GM18951 (cell line): ENCODE measurements at regions of chr2 and their contacts with region 1.

Region 1: GRCh38 chr2:73700131-73700611 is 37.0 kb downstream of the TPRKB start:
- POLR2A ChIP-seq: no peak

Region 2: GRCh38 chr2:73640511-73640911 is 59.7 kb before region 1 on chr2:
- in situ Hi-C with region 1: loop called (anchors 5 kb)
- POLR2A ChIP-seq: no peak

Region 3: GRCh38 chr2:73952499-73953458 is 252.6 kb after region 1 on chr2:
- in situ Hi-C with region 1: no loop called
- POLR2A ChIP-seq: no peak

Region 4: DNA sequence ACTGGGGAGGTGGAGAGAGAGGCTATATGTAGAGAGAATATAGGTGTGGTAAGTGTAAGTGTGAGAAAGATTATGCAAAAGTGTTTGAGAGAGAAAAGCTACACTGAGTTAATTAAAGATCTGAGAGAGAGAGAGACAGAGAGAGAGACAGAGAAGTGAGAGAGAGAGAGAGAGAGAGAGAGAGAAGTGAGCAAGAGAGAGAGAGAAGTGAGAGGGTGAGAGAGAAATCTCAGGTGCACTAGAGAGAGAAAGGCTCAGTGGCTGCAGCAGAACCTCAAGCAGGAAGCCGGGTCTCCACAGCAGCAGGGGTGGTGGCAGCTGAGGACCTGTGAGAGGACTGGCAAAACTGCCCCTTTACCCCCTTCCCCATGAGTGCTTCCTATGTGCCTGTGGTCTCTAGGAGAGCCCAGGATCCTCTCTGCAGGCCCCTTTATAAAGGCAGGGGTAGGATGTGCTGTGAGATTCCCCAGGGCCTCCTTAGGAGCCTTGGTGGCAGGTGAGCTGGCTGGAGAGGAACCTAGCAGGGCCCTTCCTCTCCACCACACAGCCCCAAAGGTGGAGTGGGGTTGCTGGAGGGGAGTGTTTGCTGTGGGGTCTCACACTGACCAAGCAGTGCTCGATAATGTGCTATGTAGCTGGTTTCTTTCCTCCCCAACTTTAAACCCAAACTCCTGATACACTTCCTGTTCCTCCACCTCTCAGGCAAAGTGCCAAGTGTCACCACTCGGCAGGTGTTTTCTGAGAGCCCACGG is 590.5 kb after region 1 on chr2:
- in situ Hi-C with region 1: no loop called
- POLR2A ChIP-seq: no peak